GM10248 (cell line): ENCODE measurements at regions of chr11 and their contacts with region 1.

Region 1: GRCh38 chr11:64304316-64305072 is 830 bp upstream of the ESRRA start:
- DNase-seq: peak; percentile 86
- CTCF ChIP-seq: peak; percentile 90

Region 2: GRCh38 chr11:64000026-64000739 is 304.3 kb before region 1 on chr11:
- CTCF ChIA-PET with region 1: interaction called, 45 read pairs
- POLR2A ChIA-PET with region 1: no interaction called
- DNase-seq: peak; percentile 90
- CTCF ChIP-seq: peak; percentile 87

Region 3: DNA sequence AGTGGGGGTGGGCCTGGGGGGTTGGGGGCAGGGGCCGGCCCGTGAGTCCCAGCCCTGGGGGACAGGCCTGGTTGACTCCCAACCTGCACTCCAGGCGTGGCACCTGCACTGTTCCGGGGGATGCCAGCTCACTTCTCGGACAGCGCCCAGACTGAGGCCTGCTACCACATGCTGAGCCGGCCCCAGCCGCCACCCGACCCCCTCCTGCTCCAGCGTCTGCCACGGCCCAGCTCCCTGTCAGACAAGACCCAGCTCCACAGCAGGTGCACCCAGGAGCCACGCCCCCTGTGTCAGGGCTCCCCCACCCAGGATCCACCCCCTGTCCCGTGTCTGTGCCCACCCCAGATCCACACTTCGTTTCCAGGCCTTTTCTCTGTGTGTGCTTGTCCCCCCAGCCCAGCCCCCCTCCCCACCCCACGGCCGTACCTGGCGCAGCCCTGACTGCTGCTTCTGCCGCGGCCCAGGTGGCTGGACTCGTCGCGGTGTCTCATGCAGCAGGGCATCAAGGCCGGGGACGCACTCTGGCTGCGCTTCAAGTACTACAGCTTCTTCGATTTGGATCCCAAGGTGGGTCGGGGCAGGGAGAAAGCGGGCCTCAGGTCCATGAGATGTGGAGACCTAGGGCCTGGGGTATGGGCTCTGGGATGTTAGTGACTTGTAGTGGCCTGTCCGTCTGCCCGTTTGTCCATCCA is 93.2 kb before region 1 on chr11:
- CTCF ChIA-PET with region 1: interaction called, 219 read pairs
- POLR2A ChIA-PET with region 1: interaction called, 8 read pairs
- DNase-seq: no peak
- CTCF ChIP-seq: no peak

Region 4: DNA sequence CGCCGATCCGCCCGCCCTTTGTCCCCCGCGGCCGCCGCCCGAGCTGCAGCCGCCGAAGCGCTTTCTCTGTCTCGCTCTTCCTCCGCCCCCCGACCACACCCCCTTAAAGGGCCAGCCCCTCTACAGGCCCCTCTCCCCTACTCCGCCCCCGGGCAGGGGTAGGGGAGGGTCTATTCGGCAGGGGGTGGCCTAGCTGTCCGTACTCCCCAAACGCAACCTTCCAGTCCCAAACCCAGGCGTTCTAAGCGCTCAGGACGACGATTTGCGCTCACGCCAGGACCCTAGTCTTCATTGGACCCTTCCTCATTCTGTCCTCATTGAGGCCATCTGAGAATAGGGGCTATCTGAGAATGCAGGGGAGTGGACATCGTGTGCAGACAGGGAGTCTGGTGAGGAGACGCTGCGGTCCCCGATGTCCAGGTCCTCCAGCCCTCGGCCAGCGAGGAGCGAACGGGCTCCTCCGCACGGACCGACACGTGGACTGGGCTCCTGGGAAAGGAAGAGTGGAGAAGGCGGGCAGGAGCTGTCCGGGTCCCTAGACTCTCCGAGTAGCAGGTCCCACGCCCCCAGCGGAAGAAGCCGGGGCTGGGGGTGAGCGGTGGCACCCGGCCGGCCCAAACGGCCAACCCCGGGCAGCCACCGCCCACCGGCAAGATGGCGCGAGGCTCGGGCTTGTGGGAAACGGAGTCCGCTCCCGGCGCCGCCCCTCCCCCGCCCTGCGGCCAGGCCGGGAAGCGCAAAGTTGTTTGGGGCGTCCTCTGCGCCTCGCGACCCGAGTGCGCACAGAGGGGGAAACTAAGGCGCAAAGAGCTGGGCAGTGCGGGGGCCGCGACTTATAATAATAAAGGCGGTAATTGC is 57.4 kb before region 1 on chr11 and contains the start of gene PPP1R14B:
- CTCF ChIA-PET with region 1: interaction called, 48 read pairs
- POLR2A ChIA-PET with region 1: no interaction called
- DNase-seq: peak; percentile 85
- CTCF ChIP-seq: no peak

Region 5: DNA sequence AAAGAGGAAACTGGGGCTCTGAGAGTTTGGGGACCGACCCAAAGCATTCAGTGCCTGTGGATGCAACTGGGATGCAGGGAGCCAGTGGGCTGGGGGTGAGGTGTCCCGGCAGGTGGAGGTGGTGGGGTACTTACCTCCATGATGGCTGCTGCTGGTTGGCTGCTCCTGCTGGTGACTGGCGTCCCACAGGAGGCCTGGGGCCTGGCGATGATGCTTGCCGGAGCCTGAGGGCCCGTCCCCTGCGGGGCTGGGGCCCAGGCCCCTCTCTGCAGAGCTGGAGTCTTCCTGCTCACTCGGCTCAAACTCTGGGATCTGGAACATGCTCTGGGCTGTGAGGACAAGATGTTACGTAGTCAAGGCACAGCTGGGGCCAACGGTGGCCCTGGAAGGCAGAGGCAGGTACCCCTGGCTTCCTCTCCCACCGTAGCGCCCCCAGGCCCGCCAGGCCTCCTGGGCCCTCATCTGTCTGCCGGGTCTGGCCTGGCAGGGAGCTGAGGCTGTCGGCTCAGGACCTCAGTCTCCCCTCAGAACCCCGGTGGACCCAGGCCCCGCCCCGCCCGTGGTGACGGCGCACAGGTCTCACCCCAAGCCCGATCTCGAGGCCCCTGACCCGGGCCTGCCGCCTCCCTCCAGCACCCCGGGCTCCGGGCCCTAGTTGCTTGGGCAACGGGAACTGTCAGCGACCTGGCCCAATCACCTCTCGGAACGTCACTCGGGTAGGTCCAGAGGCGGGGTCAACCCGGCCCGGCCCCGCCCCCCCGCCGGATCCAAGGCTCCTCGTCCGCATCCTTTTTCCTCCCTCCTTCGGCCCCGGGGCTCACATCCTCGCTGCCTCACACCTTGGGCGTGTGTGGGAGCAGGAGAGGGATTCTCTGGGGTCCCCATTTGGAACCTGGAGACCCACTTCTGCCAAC is 20.2 kb before region 1 on chr11 and contains the start of gene BAD:
- CTCF ChIA-PET with region 1: interaction called, 186 read pairs
- POLR2A ChIA-PET with region 1: interaction called, 4 read pairs
- DNase-seq: peak; percentile 99
- CTCF ChIP-seq: peak; percentile 0

Region 6: DNA sequence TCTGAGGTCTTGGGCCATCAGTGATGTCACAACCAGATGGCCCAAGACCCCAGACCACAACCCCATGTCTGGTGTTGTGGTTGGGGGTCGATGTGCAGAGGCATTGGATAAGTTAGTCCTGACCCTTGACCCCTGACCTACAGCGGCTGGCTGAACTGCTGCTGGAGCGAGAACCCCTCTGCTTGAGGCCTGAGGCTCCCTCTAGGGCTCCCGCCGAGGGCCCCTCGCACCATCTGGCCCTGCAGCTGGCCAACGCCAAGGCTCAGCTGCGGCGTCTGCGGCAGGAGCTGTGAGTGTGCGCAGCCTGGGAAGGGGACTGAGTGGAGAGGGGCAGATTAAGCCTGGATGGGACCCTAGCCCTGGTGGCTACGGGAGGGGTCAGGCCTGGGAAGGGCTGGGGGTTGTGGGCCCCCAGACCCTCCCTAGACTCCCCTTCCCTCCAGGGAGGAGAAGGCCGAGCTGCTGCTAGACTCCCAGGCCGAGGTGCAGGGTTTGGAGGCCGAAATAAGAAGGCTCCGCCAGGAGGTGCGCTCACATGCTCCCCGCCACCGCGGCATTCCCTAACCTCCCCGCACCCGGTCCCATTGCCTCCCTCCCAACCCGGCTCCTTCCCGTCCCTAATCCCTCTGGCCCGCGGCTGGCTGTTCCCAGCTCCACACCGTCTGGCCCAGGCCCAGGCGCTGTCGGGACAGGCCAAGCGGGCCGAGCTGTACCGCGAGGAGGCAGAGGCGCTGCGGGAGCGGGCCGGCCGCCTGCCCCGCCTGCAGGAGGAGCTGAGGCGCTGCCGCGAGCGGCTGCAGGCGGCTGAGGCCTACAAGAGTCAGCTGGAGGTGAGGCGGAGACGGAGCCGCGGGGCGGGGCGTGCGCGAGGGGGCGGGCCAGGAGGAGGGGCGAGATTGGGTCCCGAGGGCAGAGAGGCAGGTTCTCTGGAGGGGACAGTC is 37.6 kb after region 1 on chr11:
- CTCF ChIA-PET with region 1: interaction called, 11 read pairs
- POLR2A ChIA-PET with region 1: no interaction called
- DNase-seq: peak; percentile 95
- CTCF ChIP-seq: peak; percentile 28